ENCODE measurements at regions of chr7 and their contacts with region 1.

Region 1: GRCh38 chr7:115499956-115500355 is 530.6 kb downstream of the TFEC start:
- DNase-seq: no peak
- ATAC-seq: no peak
- H3K4me3 ChIP-seq: no peak overlapping the region
- H3K4me3 Mint-ChIP-seq: no peak overlapping the region
- H3K27ac ChIP-seq: no peak overlapping the region
- H3K27ac Mint-ChIP-seq: no peak overlapping the region
- H3K4me1 ChIP-seq: no peaks in the 10 kb centered on the region
- H3K4me1 Mint-ChIP-seq: no peaks in the 10 kb centered on the region
- H3K27me3 ChIP-seq: no peaks in the 10 kb centered on the region
- H3K27me3 Mint-ChIP-seq: peaks cover 7% of the 10 kb centered on the region
- CTCF ChIP-seq: no peak

Region 2: GRCh38 chr7:115449689-115450088 is 50.3 kb before region 1 on chr7:
- CTCF ChIA-PET with region 1: no interaction called
- POLR2A ChIA-PET with region 1: no interaction called
- intact Hi-C with region 1: loop called in 1 of 2 experiments (anchors 5 kb)
- DNase-seq: peak in 2 of 9 experiments; percentile 13 to 15
- ATAC-seq: no peak
- H3K4me3 ChIP-seq: no peak overlapping the region
- H3K4me3 Mint-ChIP-seq: no peak overlapping the region
- H3K27ac ChIP-seq: no peak overlapping the region
- H3K27ac Mint-ChIP-seq: no peak overlapping the region
- H3K4me1 ChIP-seq: no peaks in the 10 kb centered on the region
- H3K4me1 Mint-ChIP-seq: no peaks in the 10 kb centered on the region
- H3K27me3 ChIP-seq: no peaks in the 10 kb centered on the region
- H3K27me3 Mint-ChIP-seq: peaks cover 2% of the 10 kb centered on the region
- CTCF ChIP-seq: no peak

Region 3: GRCh38 chr7:115693779-115694178 is 193.8 kb after region 1 on chr7:
- CTCF ChIA-PET with region 1: no interaction called
- POLR2A ChIA-PET with region 1: no interaction called
- intact Hi-C with region 1: no loop called
- DNase-seq: no peak
- ATAC-seq: no peak
- H3K4me3 ChIP-seq: no peak overlapping the region
- H3K4me3 Mint-ChIP-seq: no peak overlapping the region
- H3K27ac ChIP-seq: no peak overlapping the region
- H3K27ac Mint-ChIP-seq: no peak overlapping the region
- H3K4me1 ChIP-seq: no peaks in the 10 kb centered on the region
- H3K4me1 Mint-ChIP-seq: no peaks in the 10 kb centered on the region
- H3K27me3 ChIP-seq: no peaks in the 10 kb centered on the region
- H3K27me3 Mint-ChIP-seq: peaks cover 2% of the 10 kb centered on the region
- CTCF ChIP-seq: no peak

Measured in CD8-positive, alpha-beta T cell (primary cell).